ENCODE measurements at regions of chr17 and their contacts with region 1.

Region 1: DNA sequence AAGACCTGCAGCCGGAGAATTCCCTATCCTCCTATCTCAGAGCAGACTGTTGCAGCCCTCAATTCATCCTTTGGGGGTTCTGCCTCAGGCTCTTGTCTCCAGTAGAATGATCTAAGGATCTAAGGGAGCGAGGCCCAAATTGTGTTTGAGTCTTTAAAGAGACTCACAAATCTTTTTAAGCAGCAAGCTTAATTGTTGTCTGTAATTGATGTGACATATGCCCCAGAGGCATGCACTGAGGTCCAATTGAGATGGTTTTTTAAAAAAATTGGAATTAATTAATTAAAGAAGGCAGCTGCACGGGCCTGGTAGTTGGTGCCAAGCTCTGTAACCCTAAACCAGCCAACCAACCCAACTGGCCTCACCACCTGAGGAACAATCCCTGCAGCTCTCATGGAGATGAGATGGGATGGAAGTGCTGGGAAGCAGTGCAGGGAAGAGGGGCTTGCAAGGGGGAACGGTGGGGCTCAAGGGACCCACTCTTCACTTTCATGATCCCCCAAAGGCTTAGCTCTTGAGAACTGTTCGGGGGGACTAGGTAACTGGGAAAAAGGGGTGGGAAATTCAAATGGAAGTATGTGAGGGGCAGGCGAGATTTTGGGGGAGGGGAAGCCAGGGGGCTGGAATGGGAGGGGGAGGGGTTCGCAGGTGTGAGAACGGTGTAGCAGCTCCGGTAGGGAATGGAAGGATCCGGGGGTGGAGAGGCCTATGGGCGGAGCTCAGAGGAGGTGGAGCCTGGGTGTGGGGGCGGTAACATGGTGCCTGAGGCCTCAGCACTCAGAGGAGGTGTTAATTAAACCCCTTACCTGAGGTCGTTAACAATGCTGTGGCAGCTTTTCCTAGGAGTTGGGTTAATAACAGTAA is 9.2 kb upstream of the ZNF652 start:
- DNase-seq: peak; percentile 95
- ATAC-seq: peak; percentile 99
- H3K4me3 Mint-ChIP-seq: peak overlapping the region; percentile 24; the same call in 1 of the 2 replicates
- H3K27ac Mint-ChIP-seq: peak overlapping the region; percentile 94
- H3K4me1 Mint-ChIP-seq: peaks cover 50% of the 10 kb centered on the region
- H3K27me3 Mint-ChIP-seq: no peaks in the 10 kb centered on the region
- CTCF ChIP-seq: no peak

Region 2: DNA sequence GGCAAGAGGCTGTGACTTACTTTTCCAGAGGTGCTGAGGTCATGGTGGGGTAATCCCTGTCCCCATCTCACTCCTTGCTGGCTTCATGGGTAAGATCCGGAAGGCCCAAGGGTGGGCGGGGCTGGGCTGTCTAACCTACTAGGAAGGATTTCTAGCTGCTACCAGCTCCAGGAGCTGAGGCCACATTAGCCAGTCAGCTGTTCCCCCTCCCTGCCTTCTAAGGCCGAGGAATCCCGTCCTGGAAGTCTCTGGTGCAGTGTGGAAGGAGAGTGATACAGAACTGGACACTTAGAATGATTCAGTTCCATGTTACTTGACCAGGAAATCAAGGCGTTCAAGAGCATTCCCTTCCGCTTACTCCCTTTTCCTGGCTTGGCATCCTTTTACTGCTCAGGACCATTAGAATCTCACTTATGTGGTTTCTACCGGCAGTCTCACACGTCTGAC is 169.7 kb before region 1 on chr17:
- CTCF ChIA-PET with region 1: no interaction called
- POLR2A ChIA-PET with region 1: no interaction called
- DNase-seq: no peak
- ATAC-seq: peak; percentile 16; the same call in 1 of the 2 replicates
- H3K4me3 Mint-ChIP-seq: no peak overlapping the region
- H3K27ac Mint-ChIP-seq: no peak overlapping the region
- H3K4me1 Mint-ChIP-seq: no peaks in the 10 kb centered on the region
- H3K27me3 Mint-ChIP-seq: peaks cover 15% of the 10 kb centered on the region
- CTCF ChIP-seq: no peak

Region 3: DNA sequence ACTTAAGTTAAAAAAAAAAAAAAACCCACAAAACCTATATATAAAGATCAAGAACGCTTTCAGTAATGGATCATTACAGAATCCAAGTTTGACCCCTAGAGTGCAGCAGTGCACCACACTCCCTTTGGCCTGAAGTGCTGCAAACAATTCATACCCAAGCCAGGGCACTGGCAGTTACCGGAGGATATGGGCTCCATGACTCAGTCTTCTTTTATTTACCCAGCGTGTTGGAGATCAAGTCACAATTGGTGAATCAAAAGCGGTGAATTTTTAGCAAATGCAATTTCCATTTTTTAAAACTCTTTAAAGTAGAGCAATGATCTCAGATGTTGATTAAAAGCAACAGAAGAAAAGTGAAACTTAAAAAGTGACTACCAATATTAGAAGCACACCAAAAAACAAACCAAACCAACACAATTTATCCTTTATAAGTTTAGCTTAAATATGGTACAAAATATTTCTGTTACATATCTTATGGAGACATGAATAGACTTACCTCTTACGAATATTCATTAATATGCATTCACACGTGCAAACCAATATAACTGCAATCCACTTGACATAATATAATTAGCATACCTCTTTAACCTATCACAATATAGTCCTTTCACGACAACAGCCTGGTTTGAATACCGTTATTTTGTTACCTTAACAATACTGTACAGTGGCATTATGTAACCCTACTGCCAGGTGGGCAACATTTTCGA is 55.5 kb before region 1 on chr17:
- CTCF ChIA-PET with region 1: interaction called, 10 read pairs
- POLR2A ChIA-PET with region 1: no interaction called
- DNase-seq: peak; percentile 63
- ATAC-seq: peak; percentile 93
- H3K4me3 Mint-ChIP-seq: no peak overlapping the region
- H3K27ac Mint-ChIP-seq: peak overlapping the region; percentile 4; the same call in 1 of the 2 replicates
- H3K4me1 Mint-ChIP-seq: peaks cover 10% of the 10 kb centered on the region
- H3K27me3 Mint-ChIP-seq: no peaks in the 10 kb centered on the region
- CTCF ChIP-seq: no peak

Region 4: DNA sequence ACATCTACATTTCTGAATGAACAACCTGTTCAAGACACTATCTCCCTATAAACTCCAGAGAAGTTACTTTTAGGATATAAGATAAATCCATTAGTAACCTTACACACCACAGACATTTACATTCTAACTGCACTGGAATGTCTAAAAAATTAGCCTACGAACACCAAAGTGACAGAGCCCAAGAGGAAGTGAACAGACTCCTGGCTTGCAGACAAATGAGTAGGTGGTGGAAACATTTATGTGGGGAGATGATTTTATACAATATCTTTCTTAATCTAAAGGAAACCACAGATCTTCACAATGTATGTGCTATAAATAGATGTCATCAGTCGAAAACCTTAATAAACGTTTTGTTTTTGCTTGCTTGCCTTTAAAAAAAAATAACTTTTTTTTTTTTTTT is 27.9 kb before region 1 on chr17:
- CTCF ChIA-PET with region 1: interaction called, 16 read pairs
- POLR2A ChIA-PET with region 1: no interaction called
- DNase-seq: no peak
- ATAC-seq: no peak
- H3K4me3 Mint-ChIP-seq: no peak overlapping the region
- H3K27ac Mint-ChIP-seq: no peak overlapping the region
- H3K4me1 Mint-ChIP-seq: peaks cover 17% of the 10 kb centered on the region
- H3K27me3 Mint-ChIP-seq: no peaks in the 10 kb centered on the region
- CTCF ChIP-seq: no peak

Region 5: DNA sequence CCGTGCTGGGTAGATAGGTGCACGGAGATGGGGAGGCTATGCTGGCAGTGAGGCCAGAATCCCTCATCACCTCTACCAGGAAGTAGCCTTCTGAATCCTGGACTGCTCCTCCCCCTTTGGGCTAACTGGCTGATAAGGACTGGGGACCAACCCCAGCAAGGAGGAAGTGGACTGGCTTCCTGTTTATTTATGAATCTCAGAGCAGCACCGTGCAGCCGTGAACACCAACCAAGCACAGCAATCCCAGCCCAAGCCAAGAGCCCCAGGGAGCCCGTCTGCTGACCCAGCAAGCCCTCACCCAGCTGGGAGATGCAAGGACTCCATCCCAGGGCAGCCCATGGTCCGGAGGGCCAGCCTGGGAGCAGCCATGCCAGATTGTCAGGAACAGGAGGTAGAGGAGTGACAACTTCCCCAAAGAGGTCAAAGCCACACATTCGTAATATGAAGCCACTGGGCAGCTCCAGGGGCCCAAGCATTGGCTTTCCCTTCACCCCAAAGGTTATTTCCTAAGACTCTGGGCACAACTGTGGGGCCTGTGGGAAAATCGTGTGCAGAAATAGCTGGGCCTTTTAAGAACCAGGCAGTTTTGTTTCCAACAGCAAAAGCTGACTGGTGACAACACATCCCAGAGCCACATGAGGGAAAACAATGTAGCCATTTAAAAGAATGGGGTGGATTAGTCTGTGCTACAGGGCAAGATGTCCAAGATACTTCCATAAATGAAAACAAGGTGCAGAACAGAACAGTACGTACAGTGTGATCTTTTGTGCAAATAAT is 19.5 kb after region 1 on chr17:
- CTCF ChIA-PET with region 1: interaction called, 23 read pairs
- POLR2A ChIA-PET with region 1: no interaction called
- DNase-seq: no peak
- ATAC-seq: no peak
- H3K4me3 Mint-ChIP-seq: no peak overlapping the region
- H3K27ac Mint-ChIP-seq: no peak overlapping the region
- H3K4me1 Mint-ChIP-seq: peaks cover 2% of the 10 kb centered on the region
- H3K27me3 Mint-ChIP-seq: no peaks in the 10 kb centered on the region; the same call in 1 of the 2 replicates
- CTCF ChIP-seq: no peak

Region 6: DNA sequence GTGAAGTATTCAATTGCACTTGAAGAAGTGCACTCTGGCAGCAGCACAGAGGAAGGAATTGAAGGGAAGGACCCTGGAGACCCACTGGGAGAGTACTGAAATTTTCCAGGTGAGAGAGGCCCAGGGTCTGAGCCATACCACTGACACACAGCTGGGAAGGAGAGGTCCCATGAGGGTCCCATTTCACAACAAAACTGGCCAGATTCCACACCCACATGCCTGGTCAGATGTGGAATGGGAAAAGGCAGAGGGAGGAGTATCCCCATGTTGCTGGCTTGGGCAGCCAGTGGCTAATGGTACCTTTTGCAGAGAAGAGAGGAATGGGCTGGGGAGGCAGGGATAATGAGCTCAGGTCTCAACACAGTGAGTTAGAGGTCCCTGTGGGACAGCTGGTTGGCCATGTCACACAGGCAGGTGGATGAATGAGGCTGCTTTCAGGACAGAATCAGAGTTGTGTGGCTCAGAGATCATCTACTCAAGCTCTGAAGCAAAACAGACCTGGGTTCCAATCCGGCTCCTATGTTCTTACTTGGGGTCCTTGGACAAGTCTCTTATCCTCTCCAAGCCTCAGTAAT is 97.7 kb after region 1 on chr17:
- CTCF ChIA-PET with region 1: no interaction called
- POLR2A ChIA-PET with region 1: no interaction called
- DNase-seq: no peak
- ATAC-seq: no peak
- H3K4me3 Mint-ChIP-seq: no peak overlapping the region
- H3K27ac Mint-ChIP-seq: no peak overlapping the region
- H3K4me1 Mint-ChIP-seq: peaks cover 33% of the 10 kb centered on the region
- H3K27me3 Mint-ChIP-seq: peaks cover 53% of the 10 kb centered on the region
- CTCF ChIP-seq: no peak